GM18951 (cell line): ENCODE measurements at regions of chr7 and their contacts with region 1.

Region 1: GRCh38 chr7:38222481-38223096 is 44.5 kb downstream of the STARD3NL start:
- POLR2A ChIP-seq: no peak

Region 2: DNA sequence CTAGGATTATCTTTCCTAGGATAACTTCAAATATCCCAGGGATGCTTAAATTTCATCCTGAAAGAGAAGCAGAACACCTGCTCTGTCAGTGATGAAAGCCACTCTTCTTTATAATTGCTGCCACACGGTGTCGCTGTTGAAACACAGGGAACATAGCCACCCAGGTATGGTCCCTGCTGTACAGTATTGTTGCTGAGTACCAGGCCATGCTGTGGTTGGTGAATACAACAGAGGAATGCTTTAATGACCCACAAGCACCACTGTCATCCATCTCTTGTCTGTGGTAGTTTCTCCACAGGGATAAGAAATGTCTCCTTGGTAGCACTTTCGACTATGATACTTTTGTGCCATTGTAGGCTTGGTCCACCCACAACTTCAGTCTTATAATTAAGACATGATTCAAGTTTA is 115.1 kb before region 1 on chr7:
- in situ Hi-C with region 1: loop called (anchors 5 kb)
- POLR2A ChIP-seq: no peak

Region 3: DNA sequence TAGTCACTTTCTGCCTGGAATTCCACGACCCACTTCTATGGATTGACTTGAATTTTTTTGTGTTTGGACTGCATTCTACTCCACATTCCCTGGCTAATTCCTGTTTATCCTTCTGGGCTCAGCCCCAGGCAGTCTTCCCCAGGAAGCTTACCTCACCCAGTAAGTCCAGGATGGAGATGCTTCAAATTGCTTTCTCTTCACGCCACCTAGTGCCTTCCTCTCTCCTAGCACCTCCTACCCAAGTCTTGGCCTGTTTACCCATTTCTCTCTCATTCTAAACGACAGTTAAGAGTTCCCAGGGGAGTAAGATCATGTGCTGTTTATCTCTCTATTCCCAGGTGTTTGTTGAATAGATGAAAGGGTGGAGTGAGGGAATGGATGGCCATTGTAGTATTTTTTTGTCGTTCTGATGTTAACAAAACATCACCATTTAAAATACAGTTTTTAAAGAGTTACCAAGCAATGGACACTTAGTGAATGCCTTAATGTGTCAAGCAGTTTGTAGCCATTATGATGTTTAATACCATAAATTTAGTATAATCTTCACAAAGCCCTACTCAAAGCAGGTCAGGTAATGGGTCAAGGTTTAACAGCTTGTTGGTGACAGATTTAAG is 96.3 kb after region 1 on chr7:
- in situ Hi-C with region 1: loop called (anchors 10 kb)
- POLR2A ChIP-seq: no peak